Right ventricle myocardium inferior (tissue), 1 donor: ENCODE measurements at regions of chr11 and their contacts with region 1.

Region 1: GRCh38 chr11:130434521-130435223 is 6.3 kb upstream of the ADAMTS8 start:
- DNase-seq: peak; percentile 76
- ATAC-seq: peak; percentile 90

Region 2: DNA sequence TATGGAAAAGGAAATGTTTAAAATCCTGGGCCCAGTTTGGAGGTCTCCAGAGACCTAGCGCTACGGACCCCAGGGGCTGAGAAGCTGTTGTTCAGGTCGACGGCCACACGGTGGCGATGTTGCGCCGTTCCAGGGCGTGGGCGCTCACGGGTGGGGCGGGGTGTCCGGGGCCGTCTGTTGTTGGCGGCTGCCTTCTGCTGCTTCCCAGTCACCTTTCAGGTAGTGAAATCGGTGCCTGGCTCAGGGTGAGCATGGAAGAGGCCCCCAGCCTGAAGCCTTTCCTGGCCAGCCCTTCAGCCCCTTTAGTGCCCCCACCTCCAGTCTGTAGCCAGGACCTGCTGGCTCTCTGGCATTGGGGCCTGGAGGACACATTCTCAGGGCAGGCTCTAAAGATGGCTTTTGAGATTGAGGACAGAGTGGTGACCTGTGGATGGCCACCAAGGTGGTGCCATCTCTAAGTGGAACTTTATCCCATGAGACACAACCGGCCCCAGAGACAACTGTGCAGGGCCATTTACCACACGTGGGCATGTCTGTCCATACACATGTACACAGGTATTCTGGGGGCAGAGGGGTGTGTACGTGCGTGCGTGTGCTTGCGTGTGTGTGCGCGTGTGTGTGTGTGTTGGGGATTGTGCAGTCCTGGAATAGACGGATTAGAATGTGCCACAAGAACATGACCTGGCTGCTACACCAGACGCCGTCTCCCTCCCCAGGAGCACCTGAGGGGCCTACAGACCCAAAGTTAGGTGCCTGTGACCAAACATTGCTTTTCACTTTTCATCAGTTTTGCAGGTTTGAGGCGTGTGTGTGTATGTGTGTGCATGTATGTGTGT is 221.3 kb before region 1 on chr11:
- intact Hi-C with region 1: loop called (anchors 2 kb)
- DNase-seq: no peak
- ATAC-seq: peak; percentile 79

Region 3: DNA sequence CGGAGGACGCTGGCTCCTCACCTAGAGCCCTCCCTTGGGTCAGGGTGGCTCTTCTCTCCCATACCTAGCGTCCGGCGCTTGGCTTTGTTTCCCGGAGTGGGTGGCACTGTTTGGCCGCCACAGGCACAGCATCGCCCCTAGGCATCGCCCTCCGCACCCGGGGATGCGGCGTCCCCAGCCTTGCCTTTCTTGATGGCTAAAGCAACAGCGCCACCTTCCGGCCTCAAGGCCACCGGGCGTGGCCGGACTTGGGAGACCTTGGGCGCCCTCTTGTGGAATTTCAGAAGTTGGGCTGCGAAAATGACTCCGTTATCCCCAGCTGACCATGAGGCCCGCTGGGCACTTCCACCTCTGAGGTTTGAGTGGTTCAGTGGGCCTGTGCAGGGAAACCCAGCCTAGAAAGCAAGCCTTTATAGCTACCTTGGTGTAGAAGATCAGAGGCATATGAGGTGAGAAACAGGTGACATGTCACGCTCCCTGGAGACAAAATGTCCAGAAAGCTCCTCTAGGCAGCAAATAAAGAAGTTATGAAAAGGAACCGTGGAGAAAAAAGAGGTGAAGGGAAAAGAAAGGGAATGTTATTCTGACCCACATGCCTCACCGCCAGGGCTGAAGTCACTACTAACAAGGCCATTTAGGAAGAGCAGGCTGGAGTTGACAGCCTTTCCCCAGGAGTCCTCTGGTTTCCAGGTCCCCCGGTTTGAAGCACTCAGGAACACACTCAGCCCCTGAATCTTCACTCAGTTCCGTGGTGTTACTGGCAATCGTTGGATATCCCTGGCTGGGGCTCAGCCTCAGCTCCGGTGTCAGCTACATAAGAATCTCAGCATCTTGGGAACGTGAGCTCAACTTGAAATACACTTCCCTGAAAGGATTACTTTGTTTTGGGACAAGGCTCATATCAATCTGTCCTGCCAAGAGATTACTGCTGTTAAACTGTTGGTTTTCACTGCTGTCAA is 427.5 kb after region 1 on chr11:
- intact Hi-C with region 1: loop called (anchors 1 kb)
- DNase-seq: peak; percentile 96
- ATAC-seq: peak; percentile 66